ENCODE measurements at regions of chr7 and their contacts with region 1.

Region 1: GRCh38 chr7:10804770-10805169 is 168.9 kb upstream of the PHF14 start:
- DNase-seq: no peak
- ATAC-seq: no peak
- H3K4me3 ChIP-seq: no peak overlapping the region
- H3K27ac ChIP-seq: no peak overlapping the region
- H3K4me1 ChIP-seq: peaks cover 0 to 7% of the 10 kb centered on the region in 2 experiments; a peak in 2 of 5 replicates
- H3K27me3 ChIP-seq: no peaks in the 10 kb centered on the region
- CTCF ChIP-seq: no peak
- EP300 ChIP-seq: no peak
- POLR2A ChIP-seq: no peak
- RAD21 ChIP-seq: no peak

Region 2: GRCh38 chr7:10284001-10284400 is 520.8 kb before region 1 on chr7:
- CTCF ChIA-PET with region 1: no interaction called
- POLR2A ChIA-PET with region 1: no interaction called
- in situ Hi-C with region 1: no loop called
- intact Hi-C with region 1: loop called (anchors 5 kb)
- DNase-seq: no peak
- ATAC-seq: no peak
- H3K4me3 ChIP-seq: no peak overlapping the region
- H3K27ac ChIP-seq: no peak overlapping the region
- H3K4me1 ChIP-seq: no peaks in the 10 kb centered on the region
- H3K27me3 ChIP-seq: no peaks in the 10 kb centered on the region
- CTCF ChIP-seq: no peak
- EP300 ChIP-seq: no peak
- POLR2A ChIP-seq: no peak
- RAD21 ChIP-seq: no peak

Region 3: GRCh38 chr7:11540271-11540761 is 735.5 kb after region 1 on chr7:
- CTCF ChIA-PET with region 1: no interaction called
- POLR2A ChIA-PET with region 1: no interaction called
- in situ Hi-C with region 1: no loop called
- intact Hi-C with region 1: no loop called
- DNase-seq: no peak
- ATAC-seq: no peak
- H3K4me3 ChIP-seq: no peak overlapping the region
- H3K27ac ChIP-seq: no peak overlapping the region
- H3K4me1 ChIP-seq: no peaks in the 10 kb centered on the region
- H3K27me3 ChIP-seq: no peaks in the 10 kb centered on the region
- CTCF ChIP-seq: no peak
- EP300 ChIP-seq: no peak
- POLR2A ChIP-seq: no peak
- RAD21 ChIP-seq: no peak

Measured in K562 (cell line).